ENCODE measurements at regions of chr12 and their contacts with region 1.

Region 1: GRCh38 chr12:113098446-113098896 is 37.1 kb downstream of the RASAL1 start:
- DNase-seq: peak; percentile 89
- ATAC-seq: peak; percentile 96
- H3K4me3 Mint-ChIP-seq: no peak overlapping the region
- H3K27ac Mint-ChIP-seq: peak overlapping the region; percentile 61
- H3K4me1 Mint-ChIP-seq: peaks cover 13% of the 10 kb centered on the region
- H3K27me3 Mint-ChIP-seq: no peaks in the 10 kb centered on the region
- CTCF ChIP-seq: peak; percentile 93

Region 2: GRCh38 chr12:113109872-113110599 is 11.6 kb after region 1 on chr12:
- CTCF ChIA-PET with region 1: interaction called, 10 read pairs
- POLR2A ChIA-PET with region 1: no interaction called
- intact Hi-C with region 1: no loop called
- DNase-seq: no peak
- ATAC-seq: peak; percentile 26
- H3K4me3 Mint-ChIP-seq: no peak overlapping the region
- H3K27ac Mint-ChIP-seq: no peak overlapping the region
- H3K4me1 Mint-ChIP-seq: peaks cover 10% of the 10 kb centered on the region
- H3K27me3 Mint-ChIP-seq: no peaks in the 10 kb centered on the region
- CTCF ChIP-seq: no peak

Region 3: GRCh38 chr12:113152835-113153814 is 54.7 kb after region 1 on chr12:
- CTCF ChIA-PET with region 1: interaction called, 15 read pairs
- POLR2A ChIA-PET with region 1: no interaction called
- intact Hi-C with region 1: no loop called
- DNase-seq: peak; percentile 83
- ATAC-seq: peak; percentile 83
- H3K4me3 Mint-ChIP-seq: peak overlapping the region; percentile 72
- H3K27ac Mint-ChIP-seq: peak overlapping the region; percentile 73
- H3K4me1 Mint-ChIP-seq: peaks cover 28% of the 10 kb centered on the region
- H3K27me3 Mint-ChIP-seq: peaks cover 21% of the 10 kb centered on the region
- CTCF ChIP-seq: peak; percentile 51